Stomach (tissue), 19 donors: ENCODE measurements at regions of chr19 and their contacts with region 1.

Region 1: GRCh38 chr19:53849237-53849676 is 18.4 kb upstream of the MYADM start:
- DNase-seq: peak in 1 of 2 donors; percentile 48
- H3K4me3 ChIP-seq: no peak overlapping the region
- H3K27ac ChIP-seq: peak overlapping the region in 2 of 5 donors; percentile 33 to 43
- H3K4me1 ChIP-seq: peaks cover 0 to 16% (median 0%) of the 10 kb centered on the region in 4 donors
- H3K27me3 ChIP-seq: peaks cover 0 to 53% (median 0%) of the 10 kb centered on the region in 3 donors
- CTCF ChIP-seq: no peak
- EP300 ChIP-seq: no peak
- POLR2A ChIP-seq: no peak

Region 2: DNA sequence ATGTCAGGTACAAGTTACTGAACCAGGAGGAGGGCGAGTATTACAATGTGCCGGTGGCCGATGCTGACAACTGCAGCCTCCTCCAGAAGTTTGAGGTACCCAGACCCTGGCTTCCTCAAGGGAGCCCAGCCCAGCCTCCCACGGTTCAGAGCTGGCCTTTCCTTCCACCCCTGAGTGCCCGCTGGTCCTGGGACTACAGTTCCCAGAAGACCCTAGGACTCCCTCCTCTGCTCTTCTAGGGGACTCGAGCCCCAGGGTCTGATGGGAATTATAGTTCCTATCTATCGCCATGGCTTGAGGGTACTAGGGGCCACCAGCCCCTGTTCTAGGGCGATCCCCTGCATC is 43.7 kb after region 1 on chr19:
- intact Hi-C with region 1: loop called (anchors 10 kb)
- DNase-seq: no peak
- H3K4me3 ChIP-seq: no peak overlapping the region
- H3K27ac ChIP-seq: no peak overlapping the region
- H3K4me1 ChIP-seq: peaks cover 0 to 11% (median 8%) of the 10 kb centered on the region in 4 donors
- H3K27me3 ChIP-seq: peaks cover 0 to 88% (median 36%) of the 10 kb centered on the region in 3 donors
- CTCF ChIP-seq: no peak
- EP300 ChIP-seq: no peak
- POLR2A ChIP-seq: no peak

Region 3: DNA sequence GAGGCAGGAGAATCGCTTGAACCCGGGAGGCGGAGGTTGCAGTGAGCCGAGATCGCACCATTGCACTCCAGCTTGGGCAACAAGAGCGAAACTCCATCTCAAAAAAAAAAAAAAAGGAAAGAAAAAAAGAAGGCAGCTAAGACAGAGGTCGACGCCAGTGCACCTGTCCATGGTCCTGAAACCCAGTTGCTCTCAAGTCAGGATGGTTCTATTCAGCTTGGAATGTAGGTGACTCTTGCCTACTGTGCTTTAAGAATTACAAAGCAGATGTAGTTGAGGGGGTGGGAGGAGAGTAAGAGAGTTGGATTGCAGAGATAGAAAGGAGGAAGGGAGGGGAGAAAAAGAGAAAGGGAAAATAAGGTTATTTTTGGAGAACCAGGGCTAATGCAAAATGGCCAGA is 78.5 kb after region 1 on chr19:
- intact Hi-C with region 1: no loop called
- DNase-seq: peak in 1 of 2 donors; percentile 87
- H3K4me3 ChIP-seq: no peak overlapping the region
- H3K27ac ChIP-seq: no peak overlapping the region
- H3K4me1 ChIP-seq: no peaks in the 10 kb centered on the region
- H3K27me3 ChIP-seq: peaks cover 0 to 7% (median 0%) of the 10 kb centered on the region in 3 donors
- CTCF ChIP-seq: no peak
- EP300 ChIP-seq: no peak
- POLR2A ChIP-seq: no peak